ENCODE measurements at regions of chr20 and their contacts with region 1.

Region 1: GRCh38 chr20:33443512-33444239 is at the start of gene SNTA1:
- DNase-seq: peak; percentile 80 to 88 (median 81)
- H3K4me3 ChIP-seq: peak within 1 kb of the TSS; percentile 42 to 85
- H3K4me3 Mint-ChIP-seq: peak within 1 kb of the TSS; percentile 92 to 97 (median 92)
- H3K27ac ChIP-seq: peak within 1 kb of the TSS; percentile 74
- H3K27ac Mint-ChIP-seq: peak within 1 kb of the TSS; percentile 90 to 97 (median 94)
- H3K4me1 ChIP-seq: peaks cover 17% of the 10 kb centered on the region
- H3K4me1 Mint-ChIP-seq: peaks cover 14 to 28% (median 22%) of the 10 kb centered on the region in 4 donors
- H3K27me3 ChIP-seq: no peaks in the 10 kb centered on the region
- H3K27me3 Mint-ChIP-seq: no peaks in the 10 kb centered on the region
- total RNA-seq, gene SNTA1: 5.1 to 5.7 TPM

Region 2: GRCh38 chr20:33233129-33233774 is 210.4 kb before region 1 on chr20:
- CTCF ChIA-PET with region 1: no interaction called
- POLR2A ChIA-PET with region 1: no interaction called
- intact Hi-C with region 1: no loop called
- DNase-seq: no peak
- H3K4me3 ChIP-seq: no peak overlapping the region
- H3K4me3 Mint-ChIP-seq: no peak overlapping the region
- H3K27ac ChIP-seq: no peak overlapping the region
- H3K27ac Mint-ChIP-seq: peak overlapping the region in 1 of 7 donors; percentile 8
- H3K4me1 ChIP-seq: no peaks in the 10 kb centered on the region
- H3K4me1 Mint-ChIP-seq: no peaks in the 10 kb centered on the region
- H3K27me3 ChIP-seq: no peaks in the 10 kb centered on the region
- H3K27me3 Mint-ChIP-seq: peaks cover 4 to 27% of the 10 kb centered on the region in 2 donors

Region 3: DNA sequence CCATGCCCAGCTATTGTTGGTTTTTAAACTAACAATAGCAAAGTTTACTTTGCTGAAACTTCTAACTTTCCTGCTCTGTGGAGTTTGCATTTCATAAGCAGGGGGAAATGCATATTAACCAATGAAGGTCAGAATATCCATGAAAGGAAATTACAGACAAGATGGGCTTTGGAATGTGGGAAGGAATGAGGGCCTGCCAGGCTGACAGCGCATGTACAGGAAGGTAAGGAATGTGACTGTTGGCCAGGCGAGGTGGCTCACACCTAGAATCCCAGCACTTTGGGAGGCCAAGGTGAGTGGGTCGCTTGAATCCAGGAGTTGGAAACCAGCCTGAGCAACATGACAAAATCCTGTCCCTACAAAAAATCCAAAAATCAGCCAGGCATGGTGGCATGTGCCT is 92.0 kb before region 1 on chr20:
- CTCF ChIA-PET with region 1: no interaction called
- POLR2A ChIA-PET with region 1: no interaction called
- intact Hi-C with region 1: no loop called
- DNase-seq: no peak
- H3K4me3 ChIP-seq: no peak overlapping the region
- H3K4me3 Mint-ChIP-seq: peak overlapping the region in 2 of 8 donors; percentile 22 to 33
- H3K27ac ChIP-seq: peak overlapping the region; percentile 13
- H3K27ac Mint-ChIP-seq: peak overlapping the region; percentile 47 to 88 (median 80)
- H3K4me1 ChIP-seq: peaks cover 7% of the 10 kb centered on the region
- H3K4me1 Mint-ChIP-seq: peaks cover 9 to 11% (median 10%) of the 10 kb centered on the region in 4 donors
- H3K27me3 ChIP-seq: no peaks in the 10 kb centered on the region
- H3K27me3 Mint-ChIP-seq: no peaks in the 10 kb centered on the region

Region 4: GRCh38 chr20:33370296-33370695 is 73.4 kb before region 1 on chr20:
- CTCF ChIA-PET with region 1: interaction called, 3 read pairs
- POLR2A ChIA-PET with region 1: no interaction called
- intact Hi-C with region 1: loop called (anchors 2 kb)
- DNase-seq: peak; percentile 82 to 96 (median 87)
- H3K4me3 ChIP-seq: no peak overlapping the region
- H3K4me3 Mint-ChIP-seq: peak overlapping the region; percentile 27 to 84 (median 61)
- H3K27ac ChIP-seq: peak overlapping the region; percentile 70
- H3K27ac Mint-ChIP-seq: peak overlapping the region; percentile 88 to 99 (median 97)
- H3K4me1 ChIP-seq: peaks cover 34% of the 10 kb centered on the region
- H3K4me1 Mint-ChIP-seq: peaks cover 16 to 50% (median 33%) of the 10 kb centered on the region in 4 donors
- H3K27me3 ChIP-seq: no peaks in the 10 kb centered on the region
- H3K27me3 Mint-ChIP-seq: no peaks in the 10 kb centered on the region

Region 5: DNA sequence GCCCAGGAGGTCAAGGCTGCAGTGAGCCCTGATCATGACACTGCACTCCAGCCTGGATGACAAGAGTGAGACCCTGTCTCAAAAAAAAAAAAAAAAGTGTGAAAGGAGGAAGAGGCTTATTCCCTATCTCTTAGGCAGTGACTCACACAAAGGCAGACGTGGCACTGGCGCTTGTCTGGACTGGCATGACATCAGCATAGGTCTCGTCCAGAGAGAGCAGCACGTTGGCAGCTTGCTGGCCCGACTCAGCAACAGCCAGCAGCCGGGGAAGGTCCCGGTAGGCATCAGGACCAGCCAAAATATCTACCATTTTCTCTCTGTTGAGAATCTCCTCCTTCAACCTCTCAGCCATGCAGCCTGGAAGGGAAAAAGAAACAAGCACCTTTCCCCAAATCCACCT is 56.5 kb before region 1 on chr20:
- CTCF ChIA-PET with region 1: no interaction called
- POLR2A ChIA-PET with region 1: no interaction called
- intact Hi-C with region 1: no loop called
- DNase-seq: no peak
- H3K4me3 ChIP-seq: no peak overlapping the region
- H3K4me3 Mint-ChIP-seq: no peak overlapping the region
- H3K27ac ChIP-seq: no peak overlapping the region
- H3K27ac Mint-ChIP-seq: peak overlapping the region in 1 of 7 donors; percentile 31
- H3K4me1 ChIP-seq: no peaks in the 10 kb centered on the region
- H3K4me1 Mint-ChIP-seq: peaks cover 0 to 6% (median under 1%) of the 10 kb centered on the region in 4 donors
- H3K27me3 ChIP-seq: no peaks in the 10 kb centered on the region
- H3K27me3 Mint-ChIP-seq: no peaks in the 10 kb centered on the region

Region 6: GRCh38 chr20:33489495-33490022 is 45.9 kb after region 1 on chr20:
- CTCF ChIA-PET with region 1: interaction called, 5 read pairs
- POLR2A ChIA-PET with region 1: interaction called, 19 read pairs
- intact Hi-C with region 1: loop called (anchors 1 kb)
- DNase-seq: peak; percentile 98 to 99 (median 99)
- H3K4me3 ChIP-seq: peak overlapping the region; percentile 61 to 70
- H3K4me3 Mint-ChIP-seq: peak overlapping the region; percentile 81 to 96 (median 86)
- H3K27ac ChIP-seq: peak overlapping the region; percentile 89
- H3K27ac Mint-ChIP-seq: peak overlapping the region; percentile 92 to 95 (median 94)
- H3K4me1 ChIP-seq: peaks cover 16% of the 10 kb centered on the region
- H3K4me1 Mint-ChIP-seq: peaks cover 8 to 24% (median 18%) of the 10 kb centered on the region in 4 donors
- H3K27me3 ChIP-seq: no peaks in the 10 kb centered on the region
- H3K27me3 Mint-ChIP-seq: no peaks in the 10 kb centered on the region

Measured in CD4-positive, alpha-beta memory T cell (primary cell).